ENCODE measurements at regions of chr4 and their contacts with region 1.

Region 1: GRCh38 chr4:138308405-138308804 is 66.3 kb upstream of the SLC7A11 start:
- DNase-seq: no peak
- H3K4me3 ChIP-seq: no peak overlapping the region
- H3K4me3 Mint-ChIP-seq: no peak overlapping the region
- H3K27ac ChIP-seq: no peak overlapping the region
- H3K27ac Mint-ChIP-seq: no peak overlapping the region
- H3K4me1 ChIP-seq: peaks cover 24 to 30% of the 10 kb centered on the region in 2 donors
- H3K4me1 Mint-ChIP-seq: peaks cover 22% of the 10 kb centered on the region
- H3K27me3 ChIP-seq: no peaks in the 10 kb centered on the region
- H3K27me3 Mint-ChIP-seq: peaks cover 0 to 5% (median 2%) of the 10 kb centered on the region in 3 donors
- CTCF ChIP-seq: no peak

Region 2: DNA sequence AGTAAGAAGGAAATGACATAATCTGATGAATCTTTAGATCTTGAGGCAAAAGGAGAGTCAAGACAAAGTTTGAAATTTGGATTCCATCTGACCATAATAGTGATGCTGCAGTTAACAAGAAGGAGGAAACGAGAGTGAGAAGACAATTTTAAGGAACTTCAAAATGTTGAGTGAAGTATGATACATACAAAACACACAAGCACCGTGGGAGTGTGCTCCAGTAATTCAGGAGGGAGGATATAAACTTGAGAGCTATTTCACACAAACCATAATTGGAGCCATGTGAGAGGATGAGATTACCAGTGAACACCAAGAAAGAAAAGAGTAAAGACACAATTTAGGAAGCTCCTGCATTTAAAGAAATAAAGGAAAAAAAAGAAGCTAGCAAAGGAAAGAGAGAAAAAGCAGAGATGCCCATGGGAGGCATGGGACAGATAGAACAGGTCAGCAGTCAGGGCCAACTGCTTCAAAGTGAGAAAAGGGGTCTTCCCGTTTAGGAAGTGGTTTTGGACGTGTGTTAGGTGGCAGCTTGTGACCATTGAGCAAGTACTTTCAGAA is 84.4 kb after region 1 on chr4:
- intact Hi-C with region 1: loop called in 1 of 2 experiments (anchors 5 kb)
- DNase-seq: peak; percentile 80 to 90 (median 85)
- H3K4me3 ChIP-seq: no peak overlapping the region
- H3K4me3 Mint-ChIP-seq: peak overlapping the region in 1 of 2 donors; percentile 74
- H3K27ac ChIP-seq: peak overlapping the region; percentile 61 to 87
- H3K27ac Mint-ChIP-seq: peak overlapping the region; percentile 88 to 98 (median 92)
- H3K4me1 ChIP-seq: peaks cover 13 to 19% of the 10 kb centered on the region in 2 donors
- H3K4me1 Mint-ChIP-seq: peaks cover 21% of the 10 kb centered on the region
- H3K27me3 ChIP-seq: no peaks in the 10 kb centered on the region
- H3K27me3 Mint-ChIP-seq: peaks cover 0 to 4% (median 3%) of the 10 kb centered on the region in 3 donors
- CTCF ChIP-seq: no peak

Region 3: DNA sequence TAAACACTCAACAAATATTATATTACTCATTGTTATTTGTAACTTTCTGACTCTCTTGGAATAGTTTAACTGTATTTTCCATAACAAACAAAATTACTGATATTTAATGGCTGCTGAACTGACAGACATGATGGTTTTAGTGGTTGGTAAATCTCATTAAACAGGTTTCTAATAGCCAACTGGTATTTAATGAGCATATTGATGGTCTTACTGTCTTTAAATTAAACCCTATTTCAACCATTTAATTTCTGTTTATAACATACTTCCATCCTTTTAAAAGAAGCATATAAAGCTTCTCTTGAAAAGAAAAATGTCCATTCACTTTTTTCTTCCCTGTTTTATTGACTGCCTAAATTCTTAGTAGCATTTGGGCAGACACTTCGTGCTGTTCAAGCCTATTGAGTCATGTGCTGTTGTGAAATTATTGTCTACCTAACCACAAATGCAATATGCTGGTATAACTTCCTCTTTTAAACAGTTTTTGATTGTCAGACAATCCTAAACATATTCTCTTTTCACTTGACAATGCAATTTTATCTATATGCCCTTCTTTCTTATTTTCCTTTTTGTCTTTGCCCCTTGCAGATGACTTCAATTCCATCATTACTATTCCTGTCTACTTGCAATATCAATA is 97.6 kb after region 1 on chr4:
- intact Hi-C with region 1: loop called in 1 of 2 experiments (anchors 5 kb)
- DNase-seq: peak; percentile 89 to 99 (median 96)
- H3K4me3 ChIP-seq: peak overlapping the region in 1 of 3 experiments; percentile 55
- H3K4me3 Mint-ChIP-seq: peak overlapping the region in 1 of 2 donors; percentile 85
- H3K27ac ChIP-seq: peak overlapping the region; percentile 21 to 91
- H3K27ac Mint-ChIP-seq: peak overlapping the region; percentile 83 to 96 (median 91)
- H3K4me1 ChIP-seq: peaks cover 34 to 37% of the 10 kb centered on the region in 2 donors
- H3K4me1 Mint-ChIP-seq: peaks cover 43% of the 10 kb centered on the region
- H3K27me3 ChIP-seq: no peaks in the 10 kb centered on the region
- H3K27me3 Mint-ChIP-seq: no peaks in the 10 kb centered on the region
- CTCF ChIP-seq: no peak